PC-9 (cell line): ENCODE measurements at regions of chr6 and their contacts with region 1.

Region 1: DNA sequence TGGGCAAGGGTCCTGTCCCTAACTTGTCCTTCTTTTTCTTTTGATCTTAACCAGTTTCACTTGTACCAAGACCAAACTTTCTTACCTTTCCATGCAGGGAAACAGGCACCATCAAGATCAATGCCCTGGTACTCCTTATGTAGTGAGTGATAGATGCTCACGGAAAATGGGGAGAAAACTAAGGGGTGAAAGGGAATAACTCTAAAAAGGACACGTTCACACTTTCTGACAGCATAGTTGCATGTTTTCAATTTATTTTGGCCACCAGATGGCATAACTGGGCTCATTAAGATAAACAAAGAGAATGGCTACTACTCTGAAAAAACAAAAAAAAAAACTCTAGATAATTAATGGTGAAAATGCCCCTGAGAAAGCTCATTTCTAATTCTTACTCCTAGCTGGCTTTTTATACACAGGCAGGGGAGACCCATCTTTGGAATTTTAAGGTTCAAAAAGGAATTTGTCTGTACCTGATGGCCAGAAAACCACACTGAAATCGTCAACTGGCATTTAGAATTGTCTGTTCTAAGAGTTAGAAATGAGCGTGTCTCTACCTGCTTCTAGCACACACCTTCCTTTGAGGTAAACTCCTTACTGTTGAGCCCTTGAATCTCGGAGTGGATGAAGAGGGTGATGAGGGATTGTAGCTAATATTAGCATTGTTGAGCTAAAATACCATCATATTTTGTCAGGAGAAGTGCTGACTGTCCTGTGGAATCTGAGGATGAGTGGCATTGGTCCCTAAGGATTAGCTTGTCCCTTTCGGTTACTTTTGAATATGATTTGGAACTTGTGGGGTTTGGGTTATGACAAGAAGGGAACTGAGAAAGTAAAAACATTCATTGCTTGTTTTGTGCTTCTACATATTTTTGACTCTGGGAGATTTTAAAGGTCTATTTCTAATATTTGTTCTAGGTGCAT is 62.2 kb upstream of the DDR1 start:
- DNase-seq: peak in 1 of 2 experiments; percentile 45
- H3K4me3 ChIP-seq: no peak overlapping the region
- H3K27ac ChIP-seq: peak overlapping the region; percentile 96
- H3K4me1 ChIP-seq: peaks cover 72% of the 10 kb centered on the region
- H3K27me3 ChIP-seq: no peaks in the 10 kb centered on the region
- CTCF ChIP-seq: peak; percentile 73

Region 2: GRCh38 chr6:30686908-30687658 is 135.0 kb before region 1 on chr6:
- CTCF ChIA-PET with region 1: no interaction called
- POLR2A ChIA-PET with region 1: no interaction called
- intact Hi-C with region 1: loop called (anchors 2 kb)
- DNase-seq: peak; percentile 80 to 98
- H3K4me3 ChIP-seq: peak overlapping the region; percentile 98
- H3K27ac ChIP-seq: peak overlapping the region; percentile 72
- H3K4me1 ChIP-seq: peaks cover 59% of the 10 kb centered on the region
- H3K27me3 ChIP-seq: no peaks in the 10 kb centered on the region
- CTCF ChIP-seq: no peak

Region 3: DNA sequence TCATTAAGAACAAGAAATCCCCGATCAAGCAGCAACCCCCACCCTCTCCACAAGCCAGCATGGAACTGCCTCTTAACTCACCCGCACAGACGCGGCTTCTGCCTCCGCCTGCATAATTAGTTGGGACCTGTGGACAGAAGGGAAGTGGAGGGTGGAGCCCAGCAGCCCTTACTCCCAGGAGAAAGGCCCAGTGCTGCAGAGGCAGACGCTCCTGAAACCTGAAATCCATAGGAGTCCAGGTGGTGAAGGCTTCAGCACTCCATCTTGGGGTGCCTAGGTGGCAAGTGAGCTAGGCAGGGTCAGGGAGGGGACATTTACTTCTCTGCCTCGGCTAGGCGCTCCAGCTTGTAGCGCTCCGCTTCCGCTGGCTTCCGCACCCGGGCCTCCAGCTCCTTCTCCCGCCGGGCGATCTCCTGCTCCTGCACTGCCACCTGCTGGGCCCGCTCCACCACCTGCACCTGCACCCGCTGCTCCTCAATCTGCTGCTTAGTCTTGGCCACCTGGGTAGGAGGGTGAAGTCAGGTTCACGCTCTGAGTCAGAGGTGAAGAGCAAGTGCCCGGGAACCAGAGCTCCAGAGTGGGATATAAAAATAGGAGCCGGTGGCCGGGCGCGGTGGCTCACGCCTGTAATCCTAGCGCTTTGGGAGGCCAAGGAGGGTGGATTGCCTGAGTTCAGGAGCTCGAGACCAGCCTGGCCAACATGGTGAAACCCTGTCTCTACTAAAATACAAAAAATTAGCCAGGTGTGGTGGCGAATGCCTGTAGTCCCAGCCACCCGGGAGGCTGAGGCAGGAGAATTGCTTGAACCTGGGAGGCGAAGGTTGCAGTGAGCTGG is 91.3 kb before region 1 on chr6:
- CTCF ChIA-PET with region 1: interaction called, 15 read pairs
- POLR2A ChIA-PET with region 1: interaction called, 8 read pairs
- intact Hi-C with region 1: no loop called
- DNase-seq: peak; percentile 89 to 92
- H3K4me3 ChIP-seq: no peak overlapping the region
- H3K27ac ChIP-seq: peak overlapping the region; percentile 18; the same call in 1 of the 2 replicates
- H3K4me1 ChIP-seq: peaks cover 16% of the 10 kb centered on the region
- H3K27me3 ChIP-seq: no peaks in the 10 kb centered on the region
- CTCF ChIP-seq: peak; percentile 80

Region 4: DNA sequence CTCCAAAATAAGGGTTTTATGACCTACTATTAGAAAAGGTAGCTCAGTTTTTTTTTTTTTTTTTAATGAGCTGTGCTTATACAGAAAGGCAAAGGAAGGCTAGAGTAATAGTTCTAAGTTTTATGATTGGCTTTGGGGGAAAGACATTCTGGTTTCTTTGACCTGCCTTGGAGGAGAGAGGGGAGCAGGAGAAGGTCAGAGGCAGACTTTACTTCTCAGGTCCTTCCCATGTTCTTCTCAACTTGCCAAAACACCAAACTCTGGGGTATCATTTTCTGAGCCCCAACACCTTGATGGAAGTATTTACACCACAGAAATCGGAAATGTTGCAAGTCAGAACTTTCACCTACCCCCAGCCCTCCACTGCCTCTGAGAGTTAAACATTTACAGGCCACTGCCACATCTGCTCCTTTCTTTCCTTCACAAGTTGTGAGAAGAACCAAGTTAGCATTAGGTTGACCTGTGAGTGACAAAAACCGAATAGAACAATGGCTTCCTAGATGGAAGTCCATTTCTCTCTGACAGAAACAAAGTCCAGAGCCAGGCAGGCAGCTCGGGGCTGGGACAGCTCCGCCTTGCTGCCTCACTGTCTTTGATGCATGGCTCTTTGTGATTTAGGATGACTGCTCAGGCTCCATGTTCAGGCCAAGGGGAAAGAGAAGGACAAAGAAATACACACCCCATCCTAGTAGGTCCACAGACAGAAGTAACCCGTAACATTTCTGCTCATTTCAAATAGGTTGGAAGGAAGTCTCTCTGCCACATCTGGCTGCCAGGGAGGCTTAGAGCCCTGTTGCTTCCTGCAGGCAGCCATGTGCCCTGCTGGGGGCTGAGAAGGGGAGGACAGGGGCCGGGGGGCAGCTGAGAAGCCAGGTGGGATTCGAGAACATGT is 58.6 kb before region 1 on chr6:
- CTCF ChIA-PET with region 1: interaction called, 5 read pairs
- POLR2A ChIA-PET with region 1: interaction called, 15 read pairs
- intact Hi-C with region 1: no loop called
- DNase-seq: no peak
- H3K4me3 ChIP-seq: no peak overlapping the region
- H3K27ac ChIP-seq: peak overlapping the region; percentile 78
- H3K4me1 ChIP-seq: peaks cover 63% of the 10 kb centered on the region
- H3K27me3 ChIP-seq: no peaks in the 10 kb centered on the region
- CTCF ChIP-seq: no peak